ENCODE measurements at regions of chr2 and their contacts with region 1.

Region 1: GRCh38 chr2:75403991-75404428 is 156.7 kb downstream of the EVA1A start:
- DNase-seq: peak; percentile 3 to 28 (median 21)
- H3K4me3 ChIP-seq: no peak overlapping the region
- H3K4me3 Mint-ChIP-seq: no peak overlapping the region
- H3K27ac ChIP-seq: no peak overlapping the region
- H3K27ac Mint-ChIP-seq: no peak overlapping the region
- H3K4me1 ChIP-seq: no peaks in the 10 kb centered on the region
- H3K4me1 Mint-ChIP-seq: no peaks in the 10 kb centered on the region
- H3K27me3 ChIP-seq: peaks cover 2 to 12% of the 10 kb centered on the region in 2 donors
- H3K27me3 Mint-ChIP-seq: peaks cover 3 to 29% (median 9%) of the 10 kb centered on the region in 3 donors
- CTCF ChIP-seq: peak; percentile 81

Region 2: GRCh38 chr2:74685408-74685807 is 718.6 kb before region 1 on chr2:
- intact Hi-C with region 1: loop called in 1 of 2 experiments (anchors 10 kb)
- DNase-seq: no peak
- H3K4me3 ChIP-seq: no peak overlapping the region
- H3K4me3 Mint-ChIP-seq: no peak overlapping the region
- H3K27ac ChIP-seq: no peak overlapping the region
- H3K27ac Mint-ChIP-seq: no peak overlapping the region
- H3K4me1 ChIP-seq: no peaks in the 10 kb centered on the region
- H3K4me1 Mint-ChIP-seq: peaks cover 4% of the 10 kb centered on the region
- H3K27me3 ChIP-seq: peaks cover 2 to 5% of the 10 kb centered on the region in 2 donors
- H3K27me3 Mint-ChIP-seq: peaks cover 0 to 7% (median 0%) of the 10 kb centered on the region in 3 donors
- CTCF ChIP-seq: no peak

Region 3: DNA sequence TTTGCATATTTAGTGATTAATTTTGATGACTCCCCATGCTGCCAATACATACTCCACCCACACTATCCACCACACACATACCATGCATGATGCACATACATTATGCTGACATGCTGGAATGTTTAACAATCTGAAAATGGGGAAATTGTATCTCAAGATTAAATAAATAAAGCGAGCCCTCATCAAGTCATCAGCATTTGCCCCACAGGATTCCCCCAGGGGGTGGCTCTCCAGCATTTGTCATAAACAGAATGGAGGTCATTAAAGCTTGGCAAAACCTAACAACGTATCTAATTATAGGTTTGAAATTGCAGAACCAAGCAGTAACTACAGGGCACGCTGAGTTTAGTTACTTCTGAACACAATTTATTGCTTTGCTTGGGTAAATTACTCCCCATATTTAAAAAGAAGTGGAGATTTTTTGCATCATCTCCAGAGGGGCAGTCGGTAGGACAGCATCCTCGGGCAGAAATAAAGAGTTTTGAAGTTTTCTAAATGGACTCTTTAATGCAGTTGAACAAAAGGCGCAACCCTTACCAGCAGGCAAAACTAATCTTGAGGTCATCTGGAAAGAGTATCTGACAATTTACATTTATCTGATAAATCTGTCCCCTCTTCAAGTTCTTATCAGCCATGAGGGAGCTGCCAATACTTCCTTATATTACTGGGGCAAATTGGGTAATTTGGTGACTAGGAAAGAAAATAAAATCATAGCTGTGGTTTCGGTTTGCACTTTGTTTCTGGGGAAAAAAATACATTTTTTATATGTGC is 63.3 kb before region 1 on chr2:
- intact Hi-C with region 1: no loop called
- DNase-seq: no peak
- H3K4me3 ChIP-seq: no peak overlapping the region
- H3K4me3 Mint-ChIP-seq: no peak overlapping the region
- H3K27ac ChIP-seq: no peak overlapping the region
- H3K27ac Mint-ChIP-seq: no peak overlapping the region
- H3K4me1 ChIP-seq: no peaks in the 10 kb centered on the region
- H3K4me1 Mint-ChIP-seq: no peaks in the 10 kb centered on the region
- H3K27me3 ChIP-seq: no peaks in the 10 kb centered on the region
- H3K27me3 Mint-ChIP-seq: peaks cover 1 to 5% (median 2%) of the 10 kb centered on the region in 3 donors
- CTCF ChIP-seq: no peak

Measured in CD14-positive monocyte (primary cell).